ENCODE measurements at regions of chr6 and their contacts with region 1.

Region 1: GRCh38 chr6:163956571-163957407 is 542.3 kb downstream of the QKI start:
- DNase-seq: peak; percentile 78 to 85
- H3K4me3 ChIP-seq: no peak overlapping the region
- H3K27ac ChIP-seq: no peak overlapping the region
- H3K4me1 ChIP-seq: peaks cover 0 to 4% (median 0%) of the 10 kb centered on the region in 4 donors
- H3K27me3 ChIP-seq: no peaks in the 10 kb centered on the region
- CTCF ChIP-seq: peak in 5 of 7 experiments; percentile 70 to 93 (median 86)
- EP300 ChIP-seq: no peak
- POLR2A ChIP-seq: no peak

Region 2: DNA sequence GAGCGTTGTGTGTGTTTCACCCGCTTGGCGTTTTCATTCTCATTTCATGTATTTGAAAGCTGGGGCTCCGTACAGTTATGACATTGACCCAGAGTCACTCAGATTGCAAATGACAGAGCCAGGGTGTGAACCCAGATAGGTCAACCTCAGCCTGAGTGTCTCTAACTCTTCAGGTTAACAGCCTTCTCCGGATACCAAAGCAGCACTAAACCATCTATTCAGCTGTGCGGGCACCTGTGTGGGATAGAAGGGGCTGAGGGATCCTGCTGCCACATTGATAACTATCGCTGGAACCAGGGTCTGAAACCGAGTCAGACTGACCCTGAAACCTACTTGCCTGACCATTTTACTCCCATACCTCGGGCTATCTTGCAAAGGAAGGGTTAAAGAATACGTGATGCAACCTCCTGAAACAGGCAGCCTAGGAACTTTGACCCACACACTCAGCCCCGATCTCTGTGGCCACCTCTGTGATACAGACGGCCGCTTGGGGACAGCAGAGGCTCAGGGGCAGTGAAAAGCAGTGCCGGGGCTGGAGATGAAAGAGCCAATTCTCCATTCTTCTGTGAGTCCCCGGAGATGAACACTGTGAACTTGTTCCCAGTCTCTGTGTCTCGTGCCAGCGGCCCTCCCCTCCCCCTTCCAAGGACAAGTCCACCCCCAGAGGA is 775.8 kb before region 1 on chr6:
- intact Hi-C with region 1: loop called (anchors 10 kb)
- DNase-seq: peak; percentile 77 to 79
- H3K4me3 ChIP-seq: no peak overlapping the region
- H3K27ac ChIP-seq: no peak overlapping the region
- H3K4me1 ChIP-seq: peaks cover 0 to 7% (median 0%) of the 10 kb centered on the region in 4 donors
- H3K27me3 ChIP-seq: no peaks in the 10 kb centered on the region
- CTCF ChIP-seq: peak in 5 of 7 experiments; percentile 57 to 78 (median 66)
- EP300 ChIP-seq: no peak
- POLR2A ChIP-seq: no peak

Region 3: DNA sequence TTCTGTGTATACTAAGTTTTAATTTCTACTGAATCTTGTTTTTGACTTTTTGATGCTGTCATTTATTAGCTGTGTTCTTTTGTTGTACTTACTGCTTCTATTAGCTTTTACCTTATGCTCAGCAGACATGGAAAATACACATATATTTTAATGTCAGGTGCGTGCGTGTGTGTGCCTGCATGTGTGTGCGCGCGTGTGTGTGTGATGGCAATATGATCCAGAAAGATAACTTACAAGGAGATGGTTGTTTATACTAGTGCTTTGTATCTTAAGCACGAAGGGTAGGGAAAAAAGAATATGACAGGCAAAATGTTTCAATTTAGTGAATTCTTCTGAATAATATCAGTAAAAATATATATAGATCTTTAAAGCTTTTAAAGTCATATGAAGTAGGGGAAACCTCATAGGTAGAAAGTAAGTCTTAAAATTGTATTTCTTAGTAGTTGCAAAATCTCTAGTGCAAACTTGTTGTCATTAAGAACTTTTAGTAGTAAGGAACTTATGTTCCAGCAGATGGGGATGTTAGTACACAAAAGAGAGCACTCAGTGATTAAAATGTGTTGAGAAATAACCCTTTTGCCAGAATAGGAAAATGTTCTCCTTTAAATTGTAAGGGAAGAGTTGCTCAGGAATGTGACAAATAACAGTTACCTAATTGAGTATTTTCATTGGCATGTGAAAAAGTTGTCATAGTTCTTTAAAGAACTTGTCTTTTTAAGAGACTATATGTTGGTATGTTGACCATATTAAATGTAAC is 529.1 kb before region 1 on chr6:
- intact Hi-C with region 1: loop called (anchors 10 kb)
- DNase-seq: peak in 1 of 2 donors; percentile 78
- H3K4me3 ChIP-seq: no peak overlapping the region
- H3K27ac ChIP-seq: no peak overlapping the region
- H3K4me1 ChIP-seq: peaks cover 28 to 97% (median 60%) of the 10 kb centered on the region in 4 donors
- H3K27me3 ChIP-seq: no peaks in the 10 kb centered on the region
- CTCF ChIP-seq: peak in 2 of 7 experiments; percentile 18 to 22
- EP300 ChIP-seq: no peak
- POLR2A ChIP-seq: no peak